Activated CD4-positive, alpha-beta T cell treated with anti-CD3 and anti-CD28 coated beads for 36 hours (primary cell): ENCODE measurements at regions of chr3 and their contacts with region 1.

Region 1: DNA sequence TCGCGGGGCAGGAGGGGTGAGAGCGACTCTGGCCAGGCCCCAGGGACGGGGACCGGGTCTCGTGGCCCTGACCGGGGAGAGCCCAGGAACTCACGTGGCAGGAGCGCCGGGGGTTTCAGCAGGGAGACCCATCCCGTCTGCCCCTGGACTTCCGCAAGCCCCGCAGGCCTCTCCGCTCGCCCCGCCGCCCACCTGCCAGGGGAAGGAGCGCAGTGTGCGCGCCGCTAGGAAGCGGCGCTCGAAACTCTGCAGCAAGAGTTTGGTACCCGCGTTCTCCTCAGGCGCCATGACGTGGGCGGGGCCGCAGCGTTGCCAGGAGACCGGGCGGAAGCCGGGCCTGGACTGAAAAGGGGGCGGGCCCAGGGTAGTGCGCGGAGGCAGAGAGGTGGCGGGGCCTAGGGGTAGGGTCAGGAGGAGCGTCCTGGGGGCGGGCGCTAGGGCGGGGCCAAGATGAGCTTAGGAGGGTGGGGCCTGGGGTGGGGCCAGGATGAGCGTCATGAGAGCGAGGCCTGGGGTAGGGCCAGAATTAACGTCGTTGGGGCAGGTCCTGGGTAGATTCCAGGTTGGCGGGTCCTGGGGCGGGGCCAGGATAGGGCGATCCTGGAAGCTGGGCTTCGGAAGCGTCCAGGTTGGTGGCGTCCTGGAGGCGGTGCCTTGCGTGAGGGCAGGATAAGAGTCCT is 29.7 kb downstream of the ALG1L2 start:
- DNase-seq: peak; percentile 100
- ATAC-seq: peak; percentile 100
- H3K4me3 Mint-ChIP-seq: peak overlapping the region; percentile 92
- H3K27ac Mint-ChIP-seq: peak overlapping the region; percentile 98
- H3K4me1 Mint-ChIP-seq: peaks cover 16% of the 10 kb centered on the region
- H3K27me3 Mint-ChIP-seq: no peaks in the 10 kb centered on the region

Region 2: DNA sequence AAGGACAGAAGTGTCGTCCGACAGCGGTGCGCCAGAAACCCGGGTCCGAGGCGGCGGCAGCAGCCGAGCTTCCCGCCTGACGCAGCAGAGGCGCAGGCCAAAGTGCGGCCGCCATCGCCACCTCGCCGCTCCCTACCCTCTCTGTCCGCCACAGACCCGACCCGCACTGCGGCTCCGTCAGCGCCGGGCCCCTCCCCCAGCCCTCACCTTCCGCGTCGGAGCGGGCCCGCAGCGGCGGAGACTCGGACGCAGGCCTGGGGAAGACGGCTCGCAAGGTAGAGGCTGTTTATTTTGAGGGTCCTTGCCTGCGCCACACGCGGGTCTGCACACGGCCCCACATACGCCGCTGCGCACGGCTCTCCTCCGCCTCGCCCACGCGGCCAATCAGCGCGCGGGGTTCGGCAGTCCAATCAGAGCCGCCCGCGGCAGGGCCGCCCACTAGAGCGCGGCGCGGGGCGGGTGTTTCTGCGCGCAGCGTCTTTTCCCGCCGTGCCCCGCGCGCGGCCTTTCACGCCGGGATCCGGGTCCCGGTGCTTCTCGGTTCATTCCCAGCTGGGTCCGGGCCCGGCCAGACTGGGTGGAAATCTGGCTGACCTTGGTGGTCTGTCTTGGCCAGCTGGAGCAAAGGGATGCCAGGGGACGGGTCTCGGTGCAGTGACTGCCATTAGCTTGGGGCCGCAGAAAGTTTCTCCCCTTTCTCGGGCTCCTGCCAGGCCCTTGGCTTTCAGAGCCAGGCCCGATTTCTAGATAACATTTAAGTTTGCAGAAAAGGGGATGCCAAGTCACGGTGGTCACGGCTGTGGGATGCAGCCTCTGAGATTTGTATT is 927.5 kb before region 1 on chr3 and contains the start of gene CNBP:
- CTCF ChIA-PET with region 1: no interaction called
- POLR2A ChIA-PET with region 1: no interaction called
- intact Hi-C with region 1: loop called in 1 of 2 experiments (anchors 5 kb)
- DNase-seq: peak; percentile 96
- ATAC-seq: peak; percentile 95
- H3K4me3 Mint-ChIP-seq: peak within 1 kb of the TSS; percentile 96
- H3K27ac Mint-ChIP-seq: peak within 1 kb of the TSS; percentile 99
- H3K4me1 Mint-ChIP-seq: peaks cover 29% of the 10 kb centered on the region
- H3K27me3 Mint-ChIP-seq: no peaks in the 10 kb centered on the region
- total RNA-seq, gene CNBP: 305 to 379 TPM

Region 3: GRCh38 chr3:129399145-129399894 is 712.0 kb before region 1 on chr3:
- CTCF ChIA-PET with region 1: no interaction called
- POLR2A ChIA-PET with region 1: no interaction called
- intact Hi-C with region 1: loop called in 1 of 2 experiments (anchors 1 kb)
- DNase-seq: peak; percentile 90
- ATAC-seq: peak; percentile 82
- H3K4me3 Mint-ChIP-seq: peak overlapping the region; percentile 99
- H3K27ac Mint-ChIP-seq: peak overlapping the region; percentile 98
- H3K4me1 Mint-ChIP-seq: peaks cover 29% of the 10 kb centered on the region
- H3K27me3 Mint-ChIP-seq: no peaks in the 10 kb centered on the region

Region 4: GRCh38 chr3:129893581-129894070 is 217.7 kb before region 1 on chr3 and contains the start of gene TMCC1:
- CTCF ChIA-PET with region 1: no interaction called
- POLR2A ChIA-PET with region 1: no interaction called
- intact Hi-C with region 1: loop called (anchors 1 to 2 kb)
- DNase-seq: peak; percentile 92
- ATAC-seq: peak; percentile 92
- H3K4me3 Mint-ChIP-seq: peak within 1 kb of the TSS; percentile 86
- H3K27ac Mint-ChIP-seq: peak within 1 kb of the TSS; percentile 85
- H3K4me1 Mint-ChIP-seq: peaks cover 36% of the 10 kb centered on the region
- H3K27me3 Mint-ChIP-seq: no peaks in the 10 kb centered on the region
- total RNA-seq, gene TMCC1: 14.8 to 17.3 TPM

Region 5: GRCh38 chr3:130746246-130747039 is 635.1 kb after region 1 on chr3 and contains the start of gene PIK3R4:
- CTCF ChIA-PET with region 1: no interaction called
- POLR2A ChIA-PET with region 1: no interaction called
- intact Hi-C with region 1: loop called in 1 of 2 experiments (anchors 2 kb)
- DNase-seq: peak; percentile 96
- ATAC-seq: peak; percentile 83
- H3K4me3 Mint-ChIP-seq: no peak within 1 kb of the TSS
- H3K27ac Mint-ChIP-seq: peak within 1 kb of the TSS; percentile 95
- H3K4me1 Mint-ChIP-seq: peaks cover 42% of the 10 kb centered on the region
- H3K27me3 Mint-ChIP-seq: no peaks in the 10 kb centered on the region
- total RNA-seq, gene PIK3R4: 27.3 to 32.3 TPM

Region 6: GRCh38 chr3:131381444-131382291 is 1270.3 kb after region 1 on chr3 and contains the start of gene NUDT16:
- CTCF ChIA-PET with region 1: no interaction called
- POLR2A ChIA-PET with region 1: no interaction called
- intact Hi-C with region 1: loop called in 1 of 2 experiments (anchors 5 kb)
- DNase-seq: peak; percentile 98
- ATAC-seq: peak; percentile 100
- H3K4me3 Mint-ChIP-seq: peak within 1 kb of the TSS; percentile 90
- H3K27ac Mint-ChIP-seq: peak within 1 kb of the TSS; percentile 91
- H3K4me1 Mint-ChIP-seq: peaks cover 22% of the 10 kb centered on the region
- H3K27me3 Mint-ChIP-seq: no peaks in the 10 kb centered on the region
- total RNA-seq, gene NUDT16: 4.0 to 5.7 TPM